ENCODE measurements at regions of chr17 and their contacts with region 1.

Region 1: GRCh38 chr17:7351665-7352501 is at the start of gene KCTD11:
- DNase-seq: peak; percentile 90
- ATAC-seq: peak; percentile 58
- H3K4me3 Mint-ChIP-seq: peak within 1 kb of the TSS; percentile 79
- H3K27ac Mint-ChIP-seq: peak within 1 kb of the TSS; percentile 84
- H3K4me1 Mint-ChIP-seq: peaks cover 55% of the 10 kb centered on the region
- H3K27me3 Mint-ChIP-seq: no peaks in the 10 kb centered on the region
- total RNA-seq, gene KCTD11: 5.0 to 6.1 TPM

Region 2: GRCh38 chr17:7314719-7315569 is 36.9 kb before region 1 on chr17 and contains the start of gene GPS2:
- CTCF ChIA-PET with region 1: interaction called, 3 read pairs
- POLR2A ChIA-PET with region 1: interaction called, 5 read pairs
- intact Hi-C with region 1: loop called in 1 of 2 experiments (anchors 2 kb)
- DNase-seq: peak; percentile 97
- ATAC-seq: peak; percentile 82
- H3K4me3 Mint-ChIP-seq: peak within 1 kb of the TSS; percentile 77
- H3K27ac Mint-ChIP-seq: peak within 1 kb of the TSS; percentile 84
- H3K4me1 Mint-ChIP-seq: peaks cover 48% of the 10 kb centered on the region
- H3K27me3 Mint-ChIP-seq: no peaks in the 10 kb centered on the region
- total RNA-seq, gene GPS2: 31.3 to 56.1 TPM

Region 3: GRCh38 chr17:7329374-7329996 is 22.4 kb before region 1 on chr17:
- CTCF ChIA-PET with region 1: interaction called, 23 read pairs
- POLR2A ChIA-PET with region 1: interaction called, 4 read pairs
- intact Hi-C with region 1: loop called in 1 of 2 experiments (anchors 1 kb)
- DNase-seq: peak; percentile 98
- ATAC-seq: peak; percentile 69
- H3K4me3 Mint-ChIP-seq: peak overlapping the region; percentile 89
- H3K27ac Mint-ChIP-seq: peak overlapping the region; percentile 96
- H3K4me1 Mint-ChIP-seq: peaks cover 44% of the 10 kb centered on the region
- H3K27me3 Mint-ChIP-seq: no peaks in the 10 kb centered on the region

Region 4: DNA sequence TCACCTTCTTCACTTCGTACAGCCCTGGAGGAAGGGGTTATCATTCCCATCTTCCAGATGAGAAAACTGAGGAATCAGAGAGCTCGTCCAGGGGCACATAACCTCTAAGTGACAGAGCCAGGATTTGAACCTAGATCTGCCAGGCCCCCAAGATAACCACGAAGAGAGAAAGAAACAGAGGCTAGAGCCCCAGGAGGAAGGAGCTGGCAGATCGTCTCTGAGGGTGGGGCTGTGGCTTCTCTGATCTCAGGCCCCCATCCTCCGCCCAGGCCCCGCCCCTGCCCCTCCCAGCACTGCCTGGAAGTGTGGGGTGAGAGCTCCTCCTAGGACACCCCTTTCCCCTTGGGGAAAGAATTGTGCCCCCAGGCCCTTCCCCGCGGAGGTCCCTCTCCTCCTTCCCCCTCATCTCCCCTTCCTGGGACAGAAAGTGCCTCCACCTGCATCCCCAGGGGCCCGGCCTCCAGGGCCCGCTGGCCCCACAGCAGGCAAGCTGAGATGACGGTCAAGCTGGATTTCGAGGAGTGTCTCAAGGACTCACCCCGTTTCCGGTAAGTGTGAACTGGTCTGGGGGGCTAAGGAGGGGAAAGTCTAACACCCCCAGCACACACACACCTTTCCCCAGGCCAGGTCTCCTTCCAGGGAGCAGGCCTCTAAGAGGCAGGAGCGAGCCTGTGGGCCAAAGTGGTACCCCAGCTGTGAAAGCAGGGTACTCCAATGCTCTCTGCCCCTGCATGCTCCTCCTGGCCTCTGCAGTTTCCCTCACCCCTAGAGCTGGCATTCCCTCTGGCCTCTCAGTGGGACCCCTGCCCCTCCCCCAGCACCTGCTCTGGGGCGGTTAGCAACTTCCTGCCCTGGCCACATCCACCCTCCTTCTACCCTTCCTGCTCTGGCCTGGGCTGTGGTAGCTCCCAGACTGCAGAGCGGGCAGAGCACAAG is 15.4 kb before region 1 on chr17 and contains the start of gene ACAP1:
- CTCF ChIA-PET with region 1: interaction called, 23 read pairs
- POLR2A ChIA-PET with region 1: interaction called, 4 read pairs
- intact Hi-C with region 1: loop called in 1 of 2 experiments (anchors 2 kb)
- DNase-seq: peak; percentile 93
- ATAC-seq: peak; percentile 95
- H3K4me3 Mint-ChIP-seq: peak within 1 kb of the TSS; percentile 98
- H3K27ac Mint-ChIP-seq: peak within 1 kb of the TSS; percentile 99
- H3K4me1 Mint-ChIP-seq: peaks cover 58% of the 10 kb centered on the region
- H3K27me3 Mint-ChIP-seq: no peaks in the 10 kb centered on the region
- total RNA-seq, gene ACAP1: 343 to 375 TPM

Region 5: GRCh38 chr17:7374353-7374752 is 22.5 kb after region 1 on chr17:
- CTCF ChIA-PET with region 1: interaction called, 13 read pairs
- POLR2A ChIA-PET with region 1: no interaction called
- intact Hi-C with region 1: no loop called
- DNase-seq: no peak
- ATAC-seq: no peak
- H3K4me3 Mint-ChIP-seq: no peak overlapping the region
- H3K27ac Mint-ChIP-seq: no peak overlapping the region
- H3K4me1 Mint-ChIP-seq: no peaks in the 10 kb centered on the region
- H3K27me3 Mint-ChIP-seq: peaks cover 9% of the 10 kb centered on the region

Region 6: GRCh38 chr17:7394452-7395191 is 42.7 kb after region 1 on chr17 and contains the start of gene PLSCR3:
- CTCF ChIA-PET with region 1: interaction called, 4 read pairs
- POLR2A ChIA-PET with region 1: no interaction called
- intact Hi-C with region 1: loop called (anchors 1 to 2 kb)
- DNase-seq: peak; percentile 90
- ATAC-seq: peak; percentile 86
- H3K4me3 Mint-ChIP-seq: peak within 1 kb of the TSS; percentile 88
- H3K27ac Mint-ChIP-seq: peak within 1 kb of the TSS; percentile 95
- H3K4me1 Mint-ChIP-seq: peaks cover 26% of the 10 kb centered on the region
- H3K27me3 Mint-ChIP-seq: no peaks in the 10 kb centered on the region
- total RNA-seq, gene PLSCR3: 69.3 to 78.9 TPM

Region 7: DNA sequence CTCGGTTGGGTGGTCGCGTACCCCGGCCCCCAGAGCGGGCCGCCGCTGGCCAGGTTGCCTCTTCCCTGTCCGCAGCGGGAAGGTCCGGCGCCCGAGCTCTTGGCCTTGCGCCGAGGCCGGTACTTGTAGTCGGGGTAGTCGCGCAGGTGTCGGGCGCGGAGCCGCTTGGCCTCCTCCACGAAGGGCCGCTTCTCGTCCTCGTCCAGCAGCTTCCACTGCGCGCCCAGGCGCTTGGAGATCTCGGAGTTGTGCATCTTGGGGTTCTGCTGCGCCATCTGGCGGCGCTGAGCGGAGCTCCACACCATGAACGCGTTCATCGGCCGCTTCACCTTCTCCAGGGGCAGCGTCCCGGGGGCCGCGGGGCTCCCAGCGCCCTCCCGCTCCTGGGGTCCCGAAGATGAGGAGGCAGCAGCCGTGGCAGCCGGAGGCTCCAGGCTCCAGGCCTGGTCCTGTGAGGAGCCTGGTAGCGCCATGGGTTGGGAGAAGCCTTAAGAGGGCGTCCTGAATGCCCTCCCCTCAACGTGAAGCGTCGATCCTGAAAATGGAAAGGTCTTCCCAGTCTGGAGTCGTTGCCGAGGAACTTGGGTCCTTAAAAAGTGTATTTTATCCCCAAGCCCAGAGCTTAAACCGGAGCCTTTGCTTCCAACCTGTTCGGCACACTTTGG is 237.5 kb after region 1 on chr17:
- CTCF ChIA-PET with region 1: interaction called, 12 read pairs
- POLR2A ChIA-PET with region 1: interaction called, 3 read pairs
- intact Hi-C with region 1: loop called in 1 of 2 experiments (anchors 1 kb)
- DNase-seq: peak; percentile 85
- ATAC-seq: peak; percentile 86
- H3K4me3 Mint-ChIP-seq: no peak overlapping the region
- H3K27ac Mint-ChIP-seq: no peak overlapping the region
- H3K4me1 Mint-ChIP-seq: peaks cover 16% of the 10 kb centered on the region
- H3K27me3 Mint-ChIP-seq: no peaks in the 10 kb centered on the region

Region 8: GRCh38 chr17:7614422-7615264 is 262.8 kb after region 1 on chr17 and contains the start of gene FXR2:
- CTCF ChIA-PET with region 1: no interaction called
- POLR2A ChIA-PET with region 1: no interaction called
- intact Hi-C with region 1: no loop called
- DNase-seq: peak; percentile 100
- ATAC-seq: peak; percentile 95
- H3K4me3 Mint-ChIP-seq: peak within 1 kb of the TSS; percentile 85
- H3K27ac Mint-ChIP-seq: peak within 1 kb of the TSS; percentile 93
- H3K4me1 Mint-ChIP-seq: peaks cover 32% of the 10 kb centered on the region
- H3K27me3 Mint-ChIP-seq: no peaks in the 10 kb centered on the region
- total RNA-seq, gene FXR2: 35.6 to 50.2 TPM